ENCODE measurements at regions of chr14 and their contacts with region 1.

Region 1: DNA sequence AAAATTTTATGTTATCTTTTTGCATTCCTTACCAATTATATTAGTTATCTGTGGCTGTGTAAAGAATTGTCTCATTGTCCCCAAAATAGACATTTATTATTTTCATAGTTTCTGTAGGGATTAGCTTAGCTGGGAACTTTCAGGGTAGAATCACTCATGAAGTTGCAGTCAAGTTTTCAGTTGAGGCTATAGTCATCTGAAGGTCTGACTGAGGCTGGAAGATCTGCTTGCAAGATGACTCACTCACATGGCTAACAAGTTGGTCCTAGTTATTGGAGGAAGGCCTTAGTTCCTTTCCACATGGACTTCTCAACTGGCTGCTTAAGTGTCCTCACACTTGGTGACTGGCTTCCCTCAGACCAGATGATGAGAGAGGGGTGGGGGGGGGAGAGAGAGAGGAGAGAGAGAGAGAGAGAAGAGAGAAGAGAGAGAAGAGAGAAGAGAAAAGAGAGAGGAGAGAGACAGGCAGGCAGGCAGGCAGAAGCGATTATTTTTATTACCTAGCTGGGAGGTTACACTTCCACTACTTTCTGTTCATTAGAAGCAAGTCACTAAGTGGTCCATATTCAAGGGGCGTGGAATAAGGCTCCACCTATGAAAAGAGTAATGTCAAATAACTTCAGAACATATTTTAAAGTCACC is 6.4 kb downstream of the AP5M1 start:
- H3K4me3 Mint-ChIP-seq: no peak overlapping the region
- H3K27ac Mint-ChIP-seq: no peak overlapping the region
- H3K4me1 Mint-ChIP-seq: peaks cover 29% of the 10 kb centered on the region
- H3K27me3 Mint-ChIP-seq: no peaks in the 10 kb centered on the region

Region 2: GRCh38 chr14:56579345-56580220 is 695.6 kb before region 1 on chr14 and contains the start of gene TMEM260:
- intact Hi-C with region 1: loop called (anchors 10 kb)
- H3K4me3 Mint-ChIP-seq: peak within 1 kb of the TSS; percentile 85
- H3K27ac Mint-ChIP-seq: peak within 1 kb of the TSS; percentile 95
- H3K4me1 Mint-ChIP-seq: peaks cover 35% of the 10 kb centered on the region
- H3K27me3 Mint-ChIP-seq: no peaks in the 10 kb centered on the region

Region 3: GRCh38 chr14:57244106-57244505 is 31.0 kb before region 1 on chr14:
- intact Hi-C with region 1: loop called (anchors 5 kb)
- H3K4me3 Mint-ChIP-seq: no peak overlapping the region
- H3K27ac Mint-ChIP-seq: no peak overlapping the region
- H3K4me1 Mint-ChIP-seq: no peaks in the 10 kb centered on the region
- H3K27me3 Mint-ChIP-seq: no peaks in the 10 kb centered on the region

Measured in dendritic cell treated with granulocyte-macrophage colony-stimulating factor and Interleukin-4, amounts not matched to agents 40 ng/mL and 50 ng/mL, for 4 days (primary cell).